ENCODE measurements at regions of chr6 and their contacts with region 1.

Region 1: DNA sequence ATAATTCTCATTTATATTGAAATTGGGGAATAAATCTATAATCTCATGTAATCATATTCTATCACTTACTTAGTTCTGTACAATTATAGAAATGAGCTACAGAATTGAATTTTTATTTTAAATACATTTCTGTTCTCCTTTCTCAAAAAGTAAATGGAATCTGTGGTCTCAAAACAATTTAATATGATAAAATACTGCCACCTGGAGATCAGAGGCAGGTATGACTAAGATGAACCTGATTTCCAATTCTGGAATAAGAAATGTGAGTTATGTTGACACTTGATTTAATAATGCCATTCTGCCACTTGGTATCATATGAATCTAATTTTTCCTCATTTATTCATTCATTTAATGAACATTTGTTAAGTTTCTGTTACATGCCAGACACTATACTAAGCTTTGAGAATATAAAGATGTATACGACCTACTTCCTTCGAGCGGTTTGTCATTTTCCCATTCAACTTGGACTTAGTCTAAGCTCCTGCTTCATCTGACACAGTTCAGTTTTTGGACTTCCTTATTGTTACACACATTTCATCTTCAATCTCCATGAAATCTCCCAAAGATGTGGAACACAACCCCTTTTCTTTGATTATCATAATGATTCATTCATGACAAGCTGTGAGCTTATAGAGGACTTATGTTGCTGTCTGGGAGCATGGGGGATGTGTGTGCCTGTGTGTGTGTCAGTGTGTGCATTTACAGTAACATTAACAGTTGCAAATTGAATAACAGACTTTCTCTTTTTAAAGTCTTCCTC is 7.5 kb upstream of the CCDC28A start:
- DNase-seq: no peak

Region 2: DNA sequence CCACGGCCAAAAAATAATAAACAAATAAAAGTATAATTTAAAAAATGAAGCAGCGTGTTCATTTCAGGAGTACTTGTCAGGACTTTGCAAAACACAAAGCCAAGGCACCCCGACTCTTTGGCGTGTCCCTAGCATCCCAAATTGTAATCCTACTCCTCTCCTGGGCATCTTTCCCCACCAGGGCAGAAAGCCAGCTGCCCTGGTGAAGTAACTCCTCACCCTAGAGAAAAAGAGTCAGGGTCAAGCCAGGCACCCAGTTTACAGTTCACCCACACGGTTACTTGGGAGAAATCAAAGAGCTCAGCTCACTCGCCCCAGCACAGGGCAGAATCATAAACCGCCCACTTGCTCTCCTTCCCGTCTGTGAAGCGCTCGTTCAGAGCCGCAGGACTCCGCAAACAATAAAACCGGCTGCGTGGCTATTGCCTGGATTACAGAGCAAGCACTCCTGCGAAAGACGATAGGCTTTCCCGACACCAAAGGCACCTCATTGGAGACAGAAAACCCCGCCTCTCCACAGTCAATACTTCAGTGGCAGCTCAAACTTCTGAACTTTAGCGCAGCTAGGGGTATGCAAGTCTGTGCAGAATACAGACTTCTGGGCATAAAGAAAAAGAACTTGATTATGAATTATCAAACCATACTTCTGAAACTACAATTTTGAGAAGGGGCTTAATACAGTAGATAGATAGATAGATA is 193.8 kb before region 1 on chr6:
- intact Hi-C with region 1: no loop called
- DNase-seq: peak; percentile 83

Region 3: GRCh38 chr6:138692058-138692977 is 73.8 kb before region 1 on chr6:
- intact Hi-C with region 1: loop called (anchors 5 kb)
- DNase-seq: peak; percentile 87

Region 4: DNA sequence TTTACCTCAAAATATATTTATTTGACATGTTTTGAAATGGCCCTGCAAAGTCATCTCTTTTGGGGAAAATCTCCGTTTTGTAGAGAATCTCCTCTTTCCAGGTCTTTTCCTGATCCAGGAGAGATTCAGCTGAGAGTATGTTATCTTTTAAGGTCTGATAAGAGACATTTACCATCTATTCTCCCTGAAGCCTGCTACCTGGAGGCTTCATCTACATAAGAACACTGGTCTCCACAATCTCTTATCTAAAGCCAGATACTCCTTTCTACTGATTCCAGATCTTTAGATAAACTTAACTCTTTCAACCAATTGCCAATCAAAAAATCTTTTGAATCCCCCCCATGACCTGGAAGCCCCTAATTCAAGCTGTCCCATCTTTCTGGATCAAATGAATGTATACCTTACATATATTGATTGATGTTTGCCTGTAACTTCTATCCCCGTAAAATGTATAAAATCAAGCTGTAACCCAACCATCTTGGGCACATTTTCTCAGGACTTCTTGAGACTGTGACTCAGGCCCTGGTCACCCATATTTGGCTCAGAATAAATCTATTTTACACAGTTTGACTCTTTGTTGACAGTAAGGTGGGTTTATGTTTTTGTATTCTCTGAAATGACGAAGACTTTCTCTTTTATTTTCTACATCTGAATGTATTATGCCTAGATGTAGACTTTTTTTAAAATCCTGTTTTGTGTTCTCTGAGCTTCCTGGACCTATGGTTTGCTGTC is 125.3 kb after region 1 on chr6:
- intact Hi-C with region 1: no loop called
- DNase-seq: no peak

Measured in cardiac septum (tissue), 1 donor.